ENCODE measurements at regions of chr7 and their contacts with region 1.

Region 1: DNA sequence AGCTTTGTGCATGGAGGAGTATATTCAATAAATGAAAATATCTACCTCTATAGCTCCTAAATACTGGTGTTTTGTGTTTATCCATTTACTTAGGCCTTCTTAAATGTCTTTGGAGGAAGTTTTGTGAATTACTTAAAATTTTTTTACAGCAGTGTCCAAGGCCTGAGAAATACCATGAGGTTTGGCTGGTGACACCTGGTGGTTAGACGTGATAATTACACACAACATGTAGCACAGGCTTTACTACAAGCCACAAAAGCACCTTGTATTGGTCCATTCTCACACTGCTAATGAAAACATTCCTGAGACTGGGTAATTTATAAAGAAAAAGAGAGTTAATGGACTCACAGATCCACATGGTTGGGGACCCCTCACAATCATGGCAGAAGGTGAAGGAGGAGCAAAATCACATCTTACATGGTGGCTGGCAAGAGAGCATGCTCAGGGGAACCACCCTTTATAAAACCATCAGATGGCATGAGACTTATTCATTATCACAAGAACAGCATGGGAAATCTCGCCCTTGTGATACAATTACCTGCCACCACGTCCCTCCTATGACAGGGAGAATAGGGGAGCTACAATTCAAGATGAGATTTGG is 20.6 kb downstream of the HYAL4 start:
- DNase-seq: no peak
- H3K4me3 ChIP-seq: no peak overlapping the region
- H3K27ac ChIP-seq: no peak overlapping the region
- H3K4me1 ChIP-seq: no peaks in the 10 kb centered on the region
- H3K27me3 ChIP-seq: no peaks in the 10 kb centered on the region
- CTCF ChIP-seq: peak; percentile 28 to 80 (median 67)
- POLR2A ChIP-seq: no peak

Region 2: GRCh38 chr7:123624527-123625183 is 241.0 kb before region 1 on chr7:
- intact Hi-C with region 1: no loop called
- DNase-seq: peak; percentile 83
- H3K4me3 ChIP-seq: no peak overlapping the region
- H3K27ac ChIP-seq: no peak overlapping the region
- H3K4me1 ChIP-seq: no peaks in the 10 kb centered on the region
- H3K27me3 ChIP-seq: no peaks in the 10 kb centered on the region
- CTCF ChIP-seq: peak in 8 of 11 experiments; percentile 31 to 65 (median 58)
- POLR2A ChIP-seq: no peak

Region 3: GRCh38 chr7:123682690-123683089 is 182.9 kb before region 1 on chr7:
- intact Hi-C with region 1: loop called (anchors 5 kb)
- DNase-seq: no peak
- H3K4me3 ChIP-seq: no peak overlapping the region
- H3K27ac ChIP-seq: no peak overlapping the region
- H3K4me1 ChIP-seq: peaks cover 0 to 21% (median 8%) of the 10 kb centered on the region in 6 donors
- H3K27me3 ChIP-seq: no peaks in the 10 kb centered on the region
- CTCF ChIP-seq: peak in 7 of 11 experiments; percentile 34 to 57 (median 52)
- POLR2A ChIP-seq: no peak

Region 4: GRCh38 chr7:123797673-123798527 is 67.7 kb before region 1 on chr7:
- intact Hi-C with region 1: loop called (anchors 10 kb)
- DNase-seq: no peak
- H3K4me3 ChIP-seq: no peak overlapping the region
- H3K27ac ChIP-seq: no peak overlapping the region
- H3K4me1 ChIP-seq: peaks cover 0 to 4% (median 0%) of the 10 kb centered on the region in 6 donors
- H3K27me3 ChIP-seq: no peaks in the 10 kb centered on the region
- CTCF ChIP-seq: peak in 8 of 11 experiments; percentile 20 to 48 (median 42)
- POLR2A ChIP-seq: no peak

Region 5: GRCh38 chr7:123916240-123916724 is 50.7 kb after region 1 on chr7:
- intact Hi-C with region 1: no loop called
- DNase-seq: no peak
- H3K4me3 ChIP-seq: no peak overlapping the region
- H3K27ac ChIP-seq: no peak overlapping the region
- H3K4me1 ChIP-seq: no peaks in the 10 kb centered on the region
- H3K27me3 ChIP-seq: no peaks in the 10 kb centered on the region
- CTCF ChIP-seq: no peak
- POLR2A ChIP-seq: no peak